ENCODE measurements at regions of chr2 and their contacts with region 1.

Region 1: GRCh38 chr2:198296665-198297308 is 492.4 kb downstream of the PLCL1 start:
- DNase-seq: peak; percentile 67
- H3K4me3 Mint-ChIP-seq: no peak overlapping the region
- H3K27ac Mint-ChIP-seq: no peak overlapping the region
- H3K4me1 Mint-ChIP-seq: peaks cover 2% of the 10 kb centered on the region
- H3K27me3 Mint-ChIP-seq: peaks cover 9% of the 10 kb centered on the region

Region 2: GRCh38 chr2:197728338-197729207 is 568.2 kb before region 1 on chr2:
- CTCF ChIA-PET with region 1: no interaction called
- POLR2A ChIA-PET with region 1: no interaction called
- intact Hi-C with region 1: loop called (anchors 5 kb)
- DNase-seq: no peak
- H3K4me3 Mint-ChIP-seq: no peak overlapping the region
- H3K27ac Mint-ChIP-seq: no peak overlapping the region
- H3K4me1 Mint-ChIP-seq: no peaks in the 10 kb centered on the region
- H3K27me3 Mint-ChIP-seq: no peaks in the 10 kb centered on the region

Region 3: GRCh38 chr2:198309673-198310280 is 13.0 kb after region 1 on chr2:
- CTCF ChIA-PET with region 1: interaction called, 15 read pairs
- POLR2A ChIA-PET with region 1: no interaction called
- intact Hi-C with region 1: no loop called
- DNase-seq: peak; percentile 65
- H3K4me3 Mint-ChIP-seq: no peak overlapping the region
- H3K27ac Mint-ChIP-seq: no peak overlapping the region
- H3K4me1 Mint-ChIP-seq: no peaks in the 10 kb centered on the region
- H3K27me3 Mint-ChIP-seq: peaks cover 21% of the 10 kb centered on the region

Region 4: DNA sequence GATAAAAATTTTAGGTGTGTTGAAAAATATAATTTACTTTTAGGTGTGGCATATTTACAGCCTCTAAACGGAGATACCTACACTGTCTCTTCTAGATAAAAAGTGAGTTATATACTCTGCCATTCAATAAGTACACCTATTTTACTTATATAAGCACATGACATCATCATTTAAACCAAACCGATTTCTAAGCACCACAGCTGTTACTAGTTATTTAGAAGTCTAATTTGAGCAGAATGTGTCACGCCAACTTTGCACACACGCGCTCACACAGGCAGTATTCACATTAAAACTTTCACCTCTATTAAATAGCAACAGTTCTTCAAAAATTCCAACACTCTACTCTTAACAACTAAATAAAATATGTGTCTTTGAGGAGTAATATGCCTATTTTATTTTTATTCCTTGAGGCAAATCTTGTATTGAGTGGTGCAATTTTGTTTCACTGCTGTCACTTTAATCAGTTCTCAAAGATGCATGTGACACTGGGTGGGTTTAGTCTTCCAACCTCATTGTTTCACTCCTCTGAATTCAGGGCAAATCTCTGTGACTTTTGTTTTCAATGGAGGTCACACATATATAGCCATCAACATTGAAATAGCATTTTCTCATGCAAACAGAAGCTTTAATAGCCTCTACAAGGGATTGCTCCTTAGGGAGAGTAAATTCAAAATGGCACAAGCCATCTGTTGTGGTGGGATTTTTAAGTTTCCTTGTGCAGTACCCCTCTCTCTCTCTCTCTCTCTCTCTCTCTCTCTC is 228.6 kb after region 1 on chr2:
- CTCF ChIA-PET with region 1: no interaction called
- POLR2A ChIA-PET with region 1: no interaction called
- intact Hi-C with region 1: no loop called
- DNase-seq: no peak
- H3K4me3 Mint-ChIP-seq: no peak overlapping the region
- H3K27ac Mint-ChIP-seq: no peak overlapping the region
- H3K4me1 Mint-ChIP-seq: no peaks in the 10 kb centered on the region
- H3K27me3 Mint-ChIP-seq: no peaks in the 10 kb centered on the region

Measured in activated CD4-positive, alpha-beta memory T cell treated with anti-CD3 and anti-CD28 coated beads for 36 hours (primary cell).